ENCODE measurements at regions of chr6 and their contacts with region 1.

Region 1: GRCh38 chr6:105424175-105424783 is 21.4 kb upstream of the PREP start:
- DNase-seq: peak in 5 of 10 donors; percentile 15 to 84 (median 45)

Region 2: GRCh38 chr6:105005451-105005850 is 418.8 kb before region 1 on chr6:
- intact Hi-C with region 1: no loop called
- DNase-seq: no peak

Region 3: DNA sequence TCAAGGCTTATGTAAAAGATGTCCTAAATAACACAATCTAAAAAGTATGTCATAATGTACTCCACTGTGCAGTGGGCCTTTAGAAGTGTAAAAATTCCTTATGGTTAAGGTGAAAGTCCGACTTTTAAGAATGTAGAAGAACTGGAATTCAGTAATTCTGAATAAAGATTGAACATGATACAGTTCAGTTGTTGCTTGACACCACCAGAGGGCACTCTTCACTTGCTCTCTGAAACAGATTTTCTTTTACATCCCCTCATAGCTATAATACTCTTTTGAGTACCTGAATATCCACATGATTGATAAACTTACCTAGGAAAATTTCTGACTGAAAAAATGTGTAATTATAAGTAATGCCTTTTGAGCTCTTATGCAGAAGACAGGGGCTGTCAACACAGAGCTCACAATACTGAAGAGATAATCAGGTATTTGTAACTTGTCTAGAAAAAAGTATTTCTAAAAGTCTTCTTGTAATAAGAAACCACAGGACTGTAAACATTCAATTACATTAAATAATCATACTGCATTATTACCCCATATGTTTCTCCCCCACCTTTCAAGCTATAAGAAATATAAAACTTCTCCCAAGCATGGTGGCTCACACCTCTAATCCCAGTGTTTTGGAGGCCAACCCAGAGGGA is 336.6 kb before region 1 on chr6:
- intact Hi-C with region 1: loop called (anchors 5 kb)
- DNase-seq: peak in 4 of 10 donors; percentile 12 to 42 (median 22)

Region 4: GRCh38 chr6:105263685-105264610 is 160.3 kb before region 1 on chr6:
- intact Hi-C with region 1: no loop called
- DNase-seq: no peak

Region 5: GRCh38 chr6:106300944-106301343 is 876.7 kb after region 1 on chr6:
- intact Hi-C with region 1: loop called (anchors 10 kb)
- DNase-seq: no peak